ENCODE measurements at regions of chr16 and their contacts with region 1.

Region 1: DNA sequence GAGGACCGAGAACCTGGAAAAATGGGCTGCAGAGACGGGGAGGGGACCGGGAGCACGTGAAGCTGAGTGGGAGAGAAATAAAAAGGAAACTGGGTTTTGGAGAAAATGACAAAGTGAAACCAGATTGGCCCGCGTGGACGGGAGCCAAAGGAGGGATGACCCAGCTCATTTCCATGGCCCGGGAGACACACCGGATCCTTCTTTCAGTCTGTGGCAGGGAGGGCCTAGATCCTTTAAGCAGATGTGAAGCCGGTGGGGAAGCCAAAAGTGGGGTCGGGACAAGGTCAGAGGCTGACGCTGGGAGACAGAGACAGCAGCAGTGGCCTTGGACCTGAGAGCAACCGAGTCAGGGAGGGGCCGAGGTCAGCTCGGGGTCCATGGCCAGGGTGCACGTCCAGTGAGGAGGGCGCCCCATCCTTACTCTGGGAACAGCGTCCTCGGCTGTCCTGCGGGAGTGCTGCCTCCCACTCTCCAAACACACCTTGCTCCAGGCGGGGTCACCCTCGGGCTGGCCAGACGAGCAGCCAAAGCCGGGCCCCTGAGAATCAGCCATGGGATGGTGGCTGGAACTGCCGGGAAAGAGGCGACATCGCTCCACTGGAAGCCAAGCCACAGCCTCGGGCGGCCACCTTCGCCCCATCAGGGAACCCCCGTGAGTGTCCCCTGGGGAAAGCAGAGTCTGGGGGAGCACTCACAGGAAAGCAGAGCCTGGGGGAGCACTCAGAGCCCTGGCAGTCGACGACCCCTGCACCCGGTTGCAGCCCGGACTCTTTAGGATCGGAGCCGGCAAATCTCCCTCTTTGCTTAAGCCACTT is 17.3 kb downstream of the CA5A start:
- DNase-seq: no peak
- H3K4me3 ChIP-seq: no peak overlapping the region
- H3K27ac ChIP-seq: peak overlapping the region in 1 of 3 donors; percentile 41
- H3K4me1 ChIP-seq: peaks cover 18 to 21% of the 10 kb centered on the region in 2 donors
- H3K27me3 ChIP-seq: no peaks in the 10 kb centered on the region
- CTCF ChIP-seq: no peak
- POLR2A ChIP-seq: no peak

Region 2: GRCh38 chr16:87853411-87854052 is 65.5 kb before region 1 on chr16:
- intact Hi-C with region 1: loop called (anchors 10 kb)
- DNase-seq: peak; percentile 96 to 97
- H3K4me3 ChIP-seq: peak overlapping the region in 1 of 3 donors; percentile 18
- H3K27ac ChIP-seq: peak overlapping the region in 2 of 3 donors; percentile 56 to 73
- H3K4me1 ChIP-seq: peaks cover 22 to 44% of the 10 kb centered on the region in 2 donors
- H3K27me3 ChIP-seq: no peaks in the 10 kb centered on the region
- CTCF ChIP-seq: no peak
- POLR2A ChIP-seq: peak in 1 of 2 donors; percentile 77

Measured in thyroid gland (tissue), 4 donors.